ENCODE measurements at regions of chr2 and their contacts with region 1.

Region 1: GRCh38 chr2:200422532-200423261 is 87.2 kb downstream of the KCTD18 start:
- DNase-seq: no peak
- H3K4me3 ChIP-seq: no peak overlapping the region
- H3K4me3 Mint-ChIP-seq: no peak overlapping the region
- H3K27ac Mint-ChIP-seq: no peak overlapping the region
- H3K4me1 ChIP-seq: 0 out of 2 replicates have a peak, but pooled peaks cover 11% of the 10 kb centered on the region
- H3K4me1 Mint-ChIP-seq: peaks cover 7% of the 10 kb centered on the region
- H3K27me3 ChIP-seq: no peaks in the 10 kb centered on the region
- H3K27me3 Mint-ChIP-seq: no peaks in the 10 kb centered on the region
- CTCF ChIP-seq: no peak

Region 2: GRCh38 chr2:199973703-199974102 is 449.0 kb before region 1 on chr2:
- CTCF ChIA-PET with region 1: interaction called, 9 read pairs
- POLR2A ChIA-PET with region 1: no interaction called
- intact Hi-C with region 1: loop called (anchors 1 kb)
- DNase-seq: no peak
- H3K4me3 ChIP-seq: no peak overlapping the region
- H3K4me3 Mint-ChIP-seq: no peak overlapping the region
- H3K27ac Mint-ChIP-seq: no peak overlapping the region
- H3K4me1 ChIP-seq: peaks cover 14% of the 10 kb centered on the region
- H3K4me1 Mint-ChIP-seq: peaks cover 15% of the 10 kb centered on the region
- H3K27me3 ChIP-seq: no peaks in the 10 kb centered on the region
- H3K27me3 Mint-ChIP-seq: no peaks in the 10 kb centered on the region
- CTCF ChIP-seq: peak; percentile 46 to 76